ENCODE measurements at regions of chr19 and their contacts with region 1.

Region 1: GRCh38 chr19:48501496-48502350 is 9.9 kb downstream of the LMTK3 start:
- DNase-seq: peak; percentile 63
- H3K4me3 Mint-ChIP-seq: peak overlapping the region; percentile 54
- H3K27ac Mint-ChIP-seq: peak overlapping the region; percentile 62
- H3K4me1 Mint-ChIP-seq: peaks cover 6% of the 10 kb centered on the region
- H3K27me3 Mint-ChIP-seq: peaks cover 5% of the 10 kb centered on the region

Region 2: DNA sequence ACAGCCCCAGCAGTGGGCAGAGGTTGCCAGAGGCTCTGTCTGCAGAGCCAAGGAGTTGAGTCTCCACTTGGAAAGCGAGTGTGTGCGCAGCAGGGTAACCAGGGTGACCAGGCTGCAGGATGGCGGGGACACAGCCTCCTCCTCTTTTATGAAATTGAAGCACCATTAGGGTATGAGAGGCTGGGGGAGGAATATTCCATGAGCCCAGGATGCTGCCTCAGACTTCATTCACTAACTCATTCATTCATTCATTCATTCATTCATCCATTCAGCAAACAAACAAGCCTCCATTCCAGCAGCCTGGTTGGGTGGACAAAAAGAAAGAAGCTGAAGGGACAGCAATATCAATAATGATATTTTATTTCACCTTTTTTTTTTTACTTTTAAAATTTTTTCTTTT is 16.5 kb after region 1 on chr19:
- intact Hi-C with region 1: no loop called
- DNase-seq: no peak
- H3K4me3 Mint-ChIP-seq: no peak overlapping the region
- H3K27ac Mint-ChIP-seq: no peak overlapping the region
- H3K4me1 Mint-ChIP-seq: peaks cover 5% of the 10 kb centered on the region
- H3K27me3 Mint-ChIP-seq: peaks cover 3% of the 10 kb centered on the region

Region 3: GRCh38 chr19:48608798-48609263 is 107.1 kb after region 1 on chr19:
- intact Hi-C with region 1: loop called (anchors 1 kb)
- DNase-seq: peak; percentile 40
- H3K4me3 Mint-ChIP-seq: no peak overlapping the region
- H3K27ac Mint-ChIP-seq: no peak overlapping the region
- H3K4me1 Mint-ChIP-seq: no peaks in the 10 kb centered on the region
- H3K27me3 Mint-ChIP-seq: no peaks in the 10 kb centered on the region

Region 4: GRCh38 chr19:48646001-48646721 is 144.4 kb after region 1 on chr19 and contains the start of gene CA11:
- intact Hi-C with region 1: no loop called
- DNase-seq: peak; percentile 88
- H3K4me3 Mint-ChIP-seq: peak within 1 kb of the TSS; percentile 87
- H3K27ac Mint-ChIP-seq: peak within 1 kb of the TSS; percentile 88
- H3K4me1 Mint-ChIP-seq: peaks cover 22% of the 10 kb centered on the region
- H3K27me3 Mint-ChIP-seq: peaks cover 6% of the 10 kb centered on the region
- total RNA-seq, gene CA11: 13.0 and 13.9 TPM in 2 replicates